Activated B cell treated with CpG ODN at 0.5 μM for 24 hours (primary cell): ENCODE measurements at regions of chr6 and their contacts with region 1.

Region 1: GRCh38 chr6:160766989-160767660 is 65.1 kb downstream of the PLG start:
- DNase-seq: peak; percentile 44
- ATAC-seq: peak; percentile 81
- H3K4me3 Mint-ChIP-seq: peak overlapping the region; percentile 77
- H3K27ac Mint-ChIP-seq: no peak overlapping the region
- H3K4me1 Mint-ChIP-seq: peaks cover 8% of the 10 kb centered on the region
- H3K27me3 Mint-ChIP-seq: peaks cover 36% of the 10 kb centered on the region
- CTCF ChIP-seq: peak; percentile 48

Region 2: GRCh38 chr6:160005861-160006540 is 761.1 kb before region 1 on chr6:
- CTCF ChIA-PET with region 1: no interaction called
- POLR2A ChIA-PET with region 1: no interaction called
- intact Hi-C with region 1: no loop called
- DNase-seq: no peak
- ATAC-seq: peak; percentile 18
- H3K4me3 Mint-ChIP-seq: no peak overlapping the region
- H3K27ac Mint-ChIP-seq: no peak overlapping the region
- H3K4me1 Mint-ChIP-seq: peaks cover 20% of the 10 kb centered on the region
- H3K27me3 Mint-ChIP-seq: no peaks in the 10 kb centered on the region
- CTCF ChIP-seq: no peak

Region 3: GRCh38 chr6:160520043-160520904 is 246.9 kb before region 1 on chr6:
- CTCF ChIA-PET with region 1: no interaction called
- POLR2A ChIA-PET with region 1: no interaction called
- intact Hi-C with region 1: loop called (anchors 1 kb)
- DNase-seq: peak; percentile 73
- ATAC-seq: peak; percentile 78
- H3K4me3 Mint-ChIP-seq: peak overlapping the region; percentile 93
- H3K27ac Mint-ChIP-seq: peak overlapping the region; percentile 81
- H3K4me1 Mint-ChIP-seq: peaks cover 11% of the 10 kb centered on the region
- H3K27me3 Mint-ChIP-seq: peaks cover 26% of the 10 kb centered on the region
- CTCF ChIP-seq: no peak

Region 4: DNA sequence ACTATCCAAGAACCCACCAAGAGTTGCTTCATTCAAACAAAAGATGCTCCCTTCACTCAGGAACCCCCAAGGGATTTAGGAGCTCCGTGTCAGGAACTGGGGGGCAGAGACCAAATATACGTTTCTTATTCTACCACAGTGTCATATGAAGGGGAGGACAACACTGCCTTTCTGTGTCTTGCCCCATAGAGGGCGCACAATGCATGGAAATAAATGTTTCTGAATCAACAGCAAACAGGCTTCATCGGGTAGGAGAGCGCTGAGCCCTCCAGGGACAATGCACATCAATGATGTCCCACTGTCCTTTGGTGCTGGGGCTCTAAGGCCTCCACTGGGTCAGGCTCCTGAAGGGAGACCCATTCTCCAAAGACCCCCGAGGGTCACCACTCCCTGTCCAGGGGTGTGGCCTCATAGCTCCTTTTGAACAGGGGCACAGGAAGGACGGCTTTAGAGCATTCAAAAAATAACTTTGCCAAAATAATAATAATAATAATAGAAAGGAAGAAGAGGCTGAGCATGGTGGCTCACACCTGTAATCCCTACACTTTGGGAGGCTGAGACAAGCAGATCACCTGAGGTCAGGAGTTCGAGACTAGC is 34.0 kb before region 1 on chr6:
- CTCF ChIA-PET with region 1: interaction called, 8 read pairs
- POLR2A ChIA-PET with region 1: no interaction called
- intact Hi-C with region 1: loop called (anchors 1 kb)
- DNase-seq: no peak
- ATAC-seq: peak; percentile 78
- H3K4me3 Mint-ChIP-seq: no peak overlapping the region
- H3K27ac Mint-ChIP-seq: no peak overlapping the region
- H3K4me1 Mint-ChIP-seq: no peaks in the 10 kb centered on the region
- H3K27me3 Mint-ChIP-seq: peaks cover 25% of the 10 kb centered on the region
- CTCF ChIP-seq: no peak

Region 5: DNA sequence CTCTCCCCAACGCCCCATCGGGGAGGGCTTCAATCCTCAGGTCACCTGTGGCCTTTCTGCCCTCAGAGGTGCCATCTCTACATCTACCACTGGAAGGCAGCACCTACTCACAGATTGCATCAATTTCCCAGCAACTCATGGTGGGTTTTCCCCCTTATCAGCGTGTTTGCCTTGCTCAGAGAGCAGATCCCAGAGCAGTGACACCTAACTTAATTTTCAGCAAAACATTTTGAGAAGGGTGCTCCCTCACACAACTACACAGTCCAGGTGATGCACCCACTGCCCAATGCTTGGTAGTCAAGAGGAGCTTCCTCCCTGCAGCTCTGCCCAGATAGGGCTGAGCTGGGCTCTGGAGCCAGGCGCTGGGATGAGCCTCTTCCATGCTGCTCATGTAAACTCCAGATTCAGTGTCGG is 16.8 kb before region 1 on chr6:
- CTCF ChIA-PET with region 1: interaction called, 4 read pairs
- POLR2A ChIA-PET with region 1: no interaction called
- intact Hi-C with region 1: loop called (anchors 2 kb)
- DNase-seq: no peak
- ATAC-seq: peak; percentile 57
- H3K4me3 Mint-ChIP-seq: no peak overlapping the region
- H3K27ac Mint-ChIP-seq: no peak overlapping the region
- H3K4me1 Mint-ChIP-seq: no peaks in the 10 kb centered on the region
- H3K27me3 Mint-ChIP-seq: peaks cover 18% of the 10 kb centered on the region
- CTCF ChIP-seq: no peak